CD8-positive, alpha-beta memory T cell (primary cell): ENCODE measurements at regions of chr19 and their contacts with region 1.

Region 1: DNA sequence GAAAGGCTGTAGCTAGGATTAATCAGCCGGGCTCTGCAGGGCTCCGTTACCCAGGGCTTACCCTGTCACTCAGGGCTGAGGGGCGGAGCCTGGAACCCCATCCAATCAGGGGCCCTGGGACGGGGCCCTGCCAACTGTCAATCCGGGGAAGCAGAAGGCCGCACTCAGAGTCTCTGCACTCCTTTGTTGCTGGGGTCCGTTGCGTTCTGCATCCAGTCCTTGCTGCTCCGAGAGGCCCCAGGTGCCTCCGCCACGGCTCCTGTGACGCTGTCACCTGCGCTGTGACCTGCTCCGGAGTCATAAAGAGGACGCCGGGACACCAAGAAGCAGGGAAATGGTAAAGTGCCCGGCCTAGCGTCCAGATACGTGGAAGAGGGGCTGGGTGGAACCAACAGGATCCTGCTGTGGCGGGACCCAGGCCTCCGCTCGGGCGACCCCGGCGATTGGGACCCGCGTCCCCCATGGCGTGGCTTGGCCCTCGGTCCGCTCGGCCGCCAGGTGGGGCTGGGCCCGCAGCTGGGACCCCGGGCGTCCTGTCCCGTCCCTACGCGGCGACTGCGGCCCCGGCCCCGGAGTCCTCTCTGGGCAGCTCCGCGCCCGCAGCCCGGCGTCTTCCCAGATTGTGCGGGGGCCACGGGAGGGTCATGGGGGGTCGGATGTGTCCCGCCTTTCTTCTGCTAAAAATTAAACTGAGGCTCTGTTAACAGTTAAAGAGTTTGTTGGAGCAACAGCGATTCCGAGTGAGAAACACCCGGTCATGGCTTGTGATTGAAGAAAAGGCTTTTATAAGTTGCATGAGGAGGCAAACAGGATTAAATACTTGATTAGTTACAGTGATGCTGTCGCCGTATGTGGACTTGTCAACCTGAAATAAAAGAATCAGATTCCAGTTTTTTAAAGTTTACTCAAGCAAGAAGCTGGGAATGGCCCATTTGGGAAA is at the start of gene ZNF491:
- DNase-seq: peak; percentile 71 to 86 (median 75)
- H3K4me3 ChIP-seq: peak within 1 kb of the TSS; percentile 67
- H3K4me3 Mint-ChIP-seq: peak within 1 kb of the TSS; percentile 87 to 95 (median 91)
- H3K27ac ChIP-seq: no peak within 1 kb of the TSS
- H3K27ac Mint-ChIP-seq: peak within 1 kb of the TSS; percentile 68 to 92 (median 88)
- H3K4me1 ChIP-seq: peaks cover 12% of the 10 kb centered on the region
- H3K4me1 Mint-ChIP-seq: peaks cover 12 to 20% (median 14%) of the 10 kb centered on the region in 3 donors
- H3K27me3 ChIP-seq: no peaks in the 10 kb centered on the region
- H3K27me3 Mint-ChIP-seq: peaks cover 0 to 5% of the 10 kb centered on the region in 2 donors
- total RNA-seq, gene ZNF491: 1.1 to 1.3 TPM

Region 2: GRCh38 chr19:11722414-11722813 is 76.2 kb before region 1 on chr19:
- CTCF ChIA-PET with region 1: no interaction called
- POLR2A ChIA-PET with region 1: no interaction called
- DNase-seq: no peak
- H3K4me3 ChIP-seq: no peak overlapping the region
- H3K4me3 Mint-ChIP-seq: no peak overlapping the region
- H3K27ac ChIP-seq: no peak overlapping the region
- H3K27ac Mint-ChIP-seq: no peak overlapping the region
- H3K4me1 ChIP-seq: no peaks in the 10 kb centered on the region
- H3K4me1 Mint-ChIP-seq: no peaks in the 10 kb centered on the region
- H3K27me3 ChIP-seq: no peaks in the 10 kb centered on the region
- H3K27me3 Mint-ChIP-seq: no peaks in the 10 kb centered on the region

Region 3: GRCh38 chr19:11814029-11814699 is 15.5 kb after region 1 on chr19 and contains the start of gene ZNF440:
- CTCF ChIA-PET with region 1: interaction called, 30 read pairs
- POLR2A ChIA-PET with region 1: interaction called, 3 read pairs
- DNase-seq: peak; percentile 72 to 85 (median 79)
- H3K4me3 ChIP-seq: peak within 1 kb of the TSS; percentile 81
- H3K4me3 Mint-ChIP-seq: peak within 1 kb of the TSS; percentile 89 to 96 (median 94)
- H3K27ac ChIP-seq: peak within 1 kb of the TSS; percentile 76
- H3K27ac Mint-ChIP-seq: peak within 1 kb of the TSS; percentile 23 to 96 (median 83)
- H3K4me1 ChIP-seq: peaks cover 4% of the 10 kb centered on the region
- H3K4me1 Mint-ChIP-seq: peaks cover 21 to 43% (median 24%) of the 10 kb centered on the region in 3 donors
- H3K27me3 ChIP-seq: no peaks in the 10 kb centered on the region
- H3K27me3 Mint-ChIP-seq: no peaks in the 10 kb centered on the region
- total RNA-seq, gene ZNF440: 6.3 to 8.4 TPM

Region 4: GRCh38 chr19:11881151-11881800 is 82.6 kb after region 1 on chr19:
- CTCF ChIA-PET with region 1: interaction called, 15 read pairs
- POLR2A ChIA-PET with region 1: no interaction called
- DNase-seq: peak; percentile 29 to 69 (median 45)
- H3K4me3 ChIP-seq: no peak overlapping the region
- H3K4me3 Mint-ChIP-seq: peak overlapping the region in 1 of 7 donors; percentile 42
- H3K27ac ChIP-seq: no peak overlapping the region
- H3K27ac Mint-ChIP-seq: peak overlapping the region in 1 of 8 donors; percentile 5
- H3K4me1 ChIP-seq: no peaks in the 10 kb centered on the region
- H3K4me1 Mint-ChIP-seq: peaks cover 0 to 2% (median 2%) of the 10 kb centered on the region in 3 donors
- H3K27me3 ChIP-seq: no peaks in the 10 kb centered on the region
- H3K27me3 Mint-ChIP-seq: peaks cover 0 to 4% of the 10 kb centered on the region in 2 donors